GM12878 (cell line): ENCODE measurements at regions of chrX and their contacts with region 1.

Region 1: GRCh38 chrX:100413229-100413628 is 3.2 kb upstream of the PCDH19 start:
- DNase-seq: peak; percentile 2
- ATAC-seq: peak; percentile 86
- H3K4me3 ChIP-seq: no peak overlapping the region
- H3K27ac ChIP-seq: no peak overlapping the region
- H3K4me1 ChIP-seq: no peaks in the 10 kb centered on the region
- H3K27me3 ChIP-seq: no peaks in the 10 kb centered on the region; a peak in 3 of 4 replicates
- CTCF ChIP-seq: peak; percentile 23 to 60 (median 39); a peak in 4 of 6 replicates
- EP300 ChIP-seq: no peak
- POLR2A ChIP-seq: no peak
- RAD21 ChIP-seq: peak; percentile 69

Region 2: GRCh38 chrX:99301990-99302389 is 1111.2 kb before region 1 on chrX:
- CTCF ChIA-PET with region 1: interaction called, 3 read pairs
- POLR2A ChIA-PET with region 1: no interaction called
- RAD21 ChIA-PET with region 1: no interaction called
- SMC1A ChIA-PET with region 1: interaction called, 3 read pairs
- in situ Hi-C with region 1: loop called (anchors 25 kb)
- intact Hi-C with region 1: loop called (anchors 2 kb)
- DNase-seq: no peak
- ATAC-seq: peak; percentile 56; the same call in 2 of the 3 replicates
- H3K4me3 ChIP-seq: no peak overlapping the region
- H3K27ac ChIP-seq: no peak overlapping the region
- H3K4me1 ChIP-seq: no peaks in the 10 kb centered on the region
- H3K27me3 ChIP-seq: no peaks in the 10 kb centered on the region
- CTCF ChIP-seq: peak; percentile 34 to 35 (median 35); a peak in 4 of 6 replicates
- EP300 ChIP-seq: no peak
- POLR2A ChIP-seq: no peak
- RAD21 ChIP-seq: peak; percentile 50

Region 3: DNA sequence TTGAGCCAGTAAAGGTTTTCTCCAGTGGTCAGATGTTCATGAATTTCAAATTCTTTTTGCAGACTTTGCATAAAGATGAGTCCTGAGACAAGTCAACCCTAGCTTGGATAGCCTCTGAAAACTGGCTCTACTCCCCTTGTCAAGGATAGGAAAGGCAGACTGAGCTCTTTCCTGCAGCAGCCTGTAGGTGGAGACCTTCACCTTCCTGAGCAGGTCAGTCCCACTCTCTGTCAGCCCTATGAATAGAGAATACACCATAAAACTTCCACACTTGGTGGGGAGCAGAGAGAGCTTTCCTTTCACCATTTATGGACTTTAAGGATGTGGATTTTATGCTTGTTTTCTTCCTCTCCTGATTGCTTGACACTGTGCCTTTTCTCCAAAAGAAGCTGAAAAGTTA is 45.1 kb before region 1 on chrX:
- CTCF ChIA-PET with region 1: interaction called, 11 read pairs
- POLR2A ChIA-PET with region 1: no interaction called
- RAD21 ChIA-PET with region 1: interaction called, 17 read pairs
- SMC1A ChIA-PET with region 1: interaction called, 10 read pairs
- in situ Hi-C with region 1: no loop called
- intact Hi-C with region 1: no loop called
- DNase-seq: no peak
- ATAC-seq: peak; percentile 79
- H3K4me3 ChIP-seq: no peak overlapping the region
- H3K27ac ChIP-seq: no peak overlapping the region
- H3K4me1 ChIP-seq: no peaks in the 10 kb centered on the region
- H3K27me3 ChIP-seq: no peaks in the 10 kb centered on the region
- CTCF ChIP-seq: peak; percentile 44 to 57 (median 47)
- EP300 ChIP-seq: no peak
- POLR2A ChIP-seq: no peak
- RAD21 ChIP-seq: peak; percentile 39

Region 4: GRCh38 chrX:100424012-100424411 is 10.8 kb after region 1 on chrX:
- CTCF ChIA-PET with region 1: interaction called, 14 read pairs
- POLR2A ChIA-PET with region 1: no interaction called
- RAD21 ChIA-PET with region 1: no interaction called
- SMC1A ChIA-PET with region 1: no interaction called
- in situ Hi-C with region 1: no loop called
- intact Hi-C with region 1: no loop called
- DNase-seq: no peak
- ATAC-seq: no peak
- H3K4me3 ChIP-seq: no peak overlapping the region
- H3K27ac ChIP-seq: no peak overlapping the region
- H3K4me1 ChIP-seq: no peaks in the 10 kb centered on the region
- H3K27me3 ChIP-seq: no peaks in the 10 kb centered on the region
- CTCF ChIP-seq: peak in 1 of 3 experiments; percentile 12; a peak in 1 of 6 replicates
- EP300 ChIP-seq: no peak
- POLR2A ChIP-seq: no peak
- RAD21 ChIP-seq: no peak

Region 5: GRCh38 chrX:100687546-100687945 is 274.3 kb after region 1 on chrX:
- CTCF ChIA-PET with region 1: no interaction called
- POLR2A ChIA-PET with region 1: no interaction called
- RAD21 ChIA-PET with region 1: no interaction called
- SMC1A ChIA-PET with region 1: no interaction called
- in situ Hi-C with region 1: no loop called
- intact Hi-C with region 1: no loop called
- DNase-seq: no peak
- ATAC-seq: peak; percentile 64
- H3K4me3 ChIP-seq: no peak overlapping the region
- H3K27ac ChIP-seq: no peak overlapping the region
- H3K4me1 ChIP-seq: peaks cover 7% of the 10 kb centered on the region; the same call in 1 of the 2 replicates
- H3K27me3 ChIP-seq: no peaks in the 10 kb centered on the region; a peak in 1 of 4 replicates
- CTCF ChIP-seq: no peak
- EP300 ChIP-seq: no peak
- POLR2A ChIP-seq: no peak
- RAD21 ChIP-seq: no peak